ENCODE measurements at regions of chr7 and their contacts with region 1.

Region 1: DNA sequence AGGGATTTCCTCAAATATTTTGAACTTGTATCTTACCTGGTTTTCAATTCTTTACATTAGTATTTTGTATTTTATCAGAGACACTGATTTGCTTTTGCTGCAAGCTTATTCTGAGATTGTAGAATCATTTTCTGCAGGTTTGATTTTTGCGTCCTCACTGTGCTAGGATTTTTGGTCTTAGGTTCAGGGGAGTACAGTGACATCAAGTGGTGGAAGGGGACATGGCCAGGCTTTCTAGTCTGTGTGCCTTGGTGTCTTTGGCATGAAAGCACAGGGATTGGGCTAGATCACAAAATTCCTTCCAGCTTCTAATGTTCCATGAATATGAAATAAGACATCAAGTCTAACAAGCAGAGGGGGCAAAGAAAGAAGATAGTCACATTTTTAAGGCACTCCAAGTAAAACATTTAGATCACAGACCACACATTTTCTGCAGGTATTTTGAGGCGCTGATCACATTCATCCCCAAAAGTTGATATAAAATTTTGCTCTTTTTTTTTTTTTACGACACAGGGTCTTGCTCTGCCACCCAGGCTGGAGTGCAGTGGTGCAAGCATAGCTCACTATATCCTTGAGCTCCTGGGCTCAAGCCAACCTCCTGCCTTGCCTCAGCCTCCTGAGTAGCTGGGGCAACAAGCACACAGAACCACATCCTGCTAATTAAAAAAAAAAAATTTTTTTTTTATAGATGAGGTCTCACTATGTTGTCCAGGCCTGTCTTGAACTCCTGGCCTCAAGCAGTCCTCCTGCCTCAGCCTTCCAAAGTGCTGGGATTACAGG is 124.4 kb downstream of the PON1 start:
- DNase-seq: no peak
- ATAC-seq: peak; percentile 69

Region 2: GRCh38 chr7:94289071-94289470 is 910.9 kb before region 1 on chr7:
- intact Hi-C with region 1: loop called (anchors 10 kb)
- DNase-seq: no peak
- ATAC-seq: peak; percentile 85

Region 3: GRCh38 chr7:94832051-94832450 is 367.9 kb before region 1 on chr7:
- intact Hi-C with region 1: no loop called
- DNase-seq: no peak
- ATAC-seq: no peak

Region 4: DNA sequence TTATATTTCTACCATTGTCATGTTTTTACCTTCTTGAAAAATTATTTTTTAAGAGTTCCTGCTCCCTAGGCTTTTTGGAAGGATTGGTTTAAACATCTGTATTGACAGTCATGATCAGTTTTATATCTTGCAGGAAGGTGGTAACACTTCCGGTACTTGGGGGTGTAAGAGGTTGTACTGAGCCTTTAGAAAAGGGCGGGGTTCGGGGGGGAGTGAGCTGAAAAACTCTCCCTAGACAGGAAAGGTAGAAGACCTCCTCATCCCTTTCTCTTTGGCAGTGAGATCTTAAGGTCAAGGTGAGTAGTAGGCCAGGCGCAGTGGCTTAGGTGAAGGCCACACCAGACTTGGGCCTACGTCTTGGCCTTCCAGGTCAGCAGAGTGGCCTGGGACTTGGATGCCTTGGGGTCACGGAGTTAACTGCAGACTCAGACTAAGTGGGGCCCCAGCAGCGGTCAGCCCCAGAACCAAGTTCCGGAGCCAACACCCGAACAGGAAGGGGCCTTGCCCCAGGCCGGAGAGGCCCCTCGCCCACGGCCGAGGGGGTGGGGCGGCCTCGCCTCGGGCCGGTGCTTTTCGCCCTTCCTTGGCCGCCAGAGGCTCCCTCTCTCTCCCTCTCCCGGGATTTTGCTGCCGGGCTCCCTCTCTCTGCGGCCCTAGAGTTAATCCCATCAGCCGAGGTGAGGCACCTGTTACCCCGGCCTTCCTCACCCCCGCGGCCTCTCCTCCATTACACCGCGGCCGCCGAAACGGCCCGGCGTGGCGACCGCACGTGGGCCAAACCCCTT is 292.8 kb before region 1 on chr7 and contains the start of gene PPP1R9A:
- intact Hi-C with region 1: loop called (anchors 10 kb)
- DNase-seq: peak; percentile 65
- ATAC-seq: peak; percentile 91
- total RNA-seq, gene PPP1R9A: 21.9 TPM

Region 5: DNA sequence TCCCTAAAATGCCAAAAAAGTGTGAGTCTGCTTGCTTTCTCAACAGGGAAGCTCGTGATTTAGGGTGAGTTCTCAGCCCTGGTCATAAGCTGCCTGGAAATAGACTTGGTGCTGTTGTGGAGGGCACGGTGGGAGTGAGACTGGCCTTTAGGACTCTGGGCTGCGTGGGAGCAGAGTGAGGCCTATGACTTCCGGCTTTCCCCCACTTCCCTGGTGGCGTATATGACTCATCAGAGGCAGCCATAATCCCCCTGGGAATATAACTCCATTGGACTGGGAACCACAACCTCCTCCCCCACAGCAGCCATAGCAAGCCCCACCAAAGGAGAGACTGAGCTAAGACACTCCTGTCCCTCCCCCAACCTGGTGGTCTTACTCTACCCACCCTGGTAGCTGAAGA is 29.3 kb after region 1 on chr7:
- intact Hi-C with region 1: no loop called
- DNase-seq: no peak
- ATAC-seq: no peak

Measured in Right ventricle myocardium inferior (tissue), 1 donor.